GM12878 (cell line): ENCODE measurements at regions of chr10 and their contacts with region 1.

Region 1: GRCh38 chr10:74189999-74190421 is 39.0 kb downstream of the ADK start:
- DNase-seq: peak; percentile 49
- ATAC-seq: peak; percentile 94
- H3K4me3 ChIP-seq: peak overlapping the region; percentile 64
- H3K27ac ChIP-seq: peak overlapping the region; percentile 76
- H3K4me1 ChIP-seq: no peaks in the 10 kb centered on the region; the same call in 1 of the 2 replicates
- H3K27me3 ChIP-seq: no peaks in the 10 kb centered on the region
- CTCF ChIP-seq: no peak
- EP300 ChIP-seq: no peak
- POLR2A ChIP-seq: peak; percentile 44; the same call in 1 of the 2 replicates
- RAD21 ChIP-seq: no peak

Region 2: GRCh38 chr10:74088722-74089121 is 101.3 kb before region 1 on chr10:
- CTCF ChIA-PET with region 1: no interaction called
- POLR2A ChIA-PET with region 1: no interaction called
- RAD21 ChIA-PET with region 1: no interaction called
- SMC1A ChIA-PET with region 1: no interaction called
- in situ Hi-C with region 1: no loop called
- intact Hi-C with region 1: no loop called
- DNase-seq: no peak
- ATAC-seq: no peak
- H3K4me3 ChIP-seq: no peak overlapping the region
- H3K27ac ChIP-seq: no peak overlapping the region
- H3K4me1 ChIP-seq: peaks cover 10% of the 10 kb centered on the region
- H3K27me3 ChIP-seq: no peaks in the 10 kb centered on the region
- CTCF ChIP-seq: no peak
- EP300 ChIP-seq: no peak
- POLR2A ChIP-seq: no peak
- RAD21 ChIP-seq: no peak

Region 3: GRCh38 chr10:74156919-74157289 is 33.1 kb before region 1 on chr10:
- CTCF ChIA-PET with region 1: interaction called, 9 read pairs
- POLR2A ChIA-PET with region 1: interaction called, 12 read pairs
- RAD21 ChIA-PET with region 1: interaction called, 7 read pairs
- SMC1A ChIA-PET with region 1: interaction called, 16 read pairs
- in situ Hi-C with region 1: no loop called
- intact Hi-C with region 1: no loop called
- DNase-seq: no peak
- ATAC-seq: peak; percentile 69
- H3K4me3 ChIP-seq: 0 out of 2 replicates have a peak overlapping the region, but pooled peaks have one; percentile 10
- H3K27ac ChIP-seq: peak overlapping the region; percentile 38; the same call in 1 of the 2 replicates
- H3K4me1 ChIP-seq: peaks cover 14% of the 10 kb centered on the region
- H3K27me3 ChIP-seq: no peaks in the 10 kb centered on the region
- CTCF ChIP-seq: no peak
- EP300 ChIP-seq: no peak
- POLR2A ChIP-seq: no peak
- RAD21 ChIP-seq: no peak

Region 4: DNA sequence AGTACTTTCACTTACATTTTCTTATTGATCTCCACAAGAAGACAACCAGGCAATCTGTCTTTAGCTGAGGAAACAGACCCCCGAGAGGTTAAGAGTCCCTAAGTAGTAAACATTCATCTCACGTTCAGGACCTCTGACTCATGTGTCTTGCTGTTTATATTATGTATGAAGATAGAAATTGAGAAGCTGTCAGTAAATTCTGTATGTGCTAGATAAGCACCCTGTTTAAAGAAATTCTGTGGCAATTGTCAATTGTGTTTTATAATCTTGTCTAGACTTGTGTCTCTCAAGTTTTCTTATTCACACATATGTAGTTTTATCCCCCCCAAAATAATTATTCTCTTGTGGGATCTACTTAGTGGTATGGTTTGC is 24.5 kb before region 1 on chr10:
- CTCF ChIA-PET with region 1: interaction called, 6 read pairs
- POLR2A ChIA-PET with region 1: interaction called, 4 read pairs
- RAD21 ChIA-PET with region 1: interaction called, 12 read pairs
- SMC1A ChIA-PET with region 1: interaction called, 26 read pairs
- in situ Hi-C with region 1: no loop called
- intact Hi-C with region 1: no loop called
- DNase-seq: no peak
- ATAC-seq: peak; percentile 26
- H3K4me3 ChIP-seq: 0 out of 2 replicates have a peak overlapping the region, but pooled peaks have one; percentile 7
- H3K27ac ChIP-seq: peak overlapping the region; percentile 66; the same call in 1 of the 2 replicates
- H3K4me1 ChIP-seq: peaks cover 53% of the 10 kb centered on the region
- H3K27me3 ChIP-seq: no peaks in the 10 kb centered on the region
- CTCF ChIP-seq: no peak
- EP300 ChIP-seq: no peak
- POLR2A ChIP-seq: no peak
- RAD21 ChIP-seq: no peak

Region 5: DNA sequence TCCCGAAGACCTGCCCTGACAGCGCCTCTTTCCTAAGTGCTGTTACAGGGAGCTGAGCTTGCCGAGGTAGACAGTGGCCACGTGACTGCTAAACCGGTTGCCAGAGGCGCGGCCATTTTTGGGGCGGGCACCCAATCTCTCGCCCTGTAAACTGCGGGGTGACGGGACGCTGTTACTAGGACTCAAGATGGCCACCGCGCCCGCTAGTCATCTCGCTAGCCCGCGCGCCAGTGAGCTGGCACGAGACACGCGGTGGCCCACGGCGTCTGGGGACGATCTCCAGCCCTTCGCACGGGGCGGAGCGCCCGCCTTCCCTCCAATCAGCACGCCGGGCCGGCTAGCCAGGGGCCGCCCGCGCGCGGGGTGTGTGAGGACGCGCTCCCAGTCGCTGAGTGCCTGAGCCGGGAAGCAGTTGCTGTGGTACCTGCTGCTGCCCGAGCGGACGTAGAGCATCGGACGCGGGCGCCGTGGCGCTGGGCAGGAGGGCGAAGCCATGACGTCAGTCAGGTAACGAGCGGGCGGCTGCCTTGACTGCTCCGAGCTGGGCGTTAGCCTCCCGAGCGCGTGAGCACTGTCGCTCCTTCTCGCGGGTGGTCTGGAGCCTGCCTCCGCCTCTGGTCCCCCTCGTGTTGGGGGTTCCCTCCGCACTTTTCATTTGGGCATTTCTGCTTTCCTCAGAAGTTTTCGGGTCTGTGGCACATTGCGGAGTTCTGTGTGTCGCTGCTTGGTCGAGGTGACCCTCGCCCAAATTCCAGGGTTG is 13.4 kb before region 1 on chr10:
- CTCF ChIA-PET with region 1: interaction called, 4 read pairs
- POLR2A ChIA-PET with region 1: interaction called, 14 read pairs
- RAD21 ChIA-PET with region 1: interaction called, 9 read pairs
- SMC1A ChIA-PET with region 1: interaction called, 35 read pairs
- in situ Hi-C with region 1: no loop called
- intact Hi-C with region 1: no loop called
- DNase-seq: peak; percentile 84
- ATAC-seq: peak; percentile 95
- H3K4me3 ChIP-seq: peak overlapping the region; percentile 88
- H3K27ac ChIP-seq: peak overlapping the region; percentile 74
- H3K4me1 ChIP-seq: peaks cover 22% of the 10 kb centered on the region
- H3K27me3 ChIP-seq: no peaks in the 10 kb centered on the region
- CTCF ChIP-seq: no peak
- EP300 ChIP-seq: peak in 1 of 2 experiments; percentile 22; a peak in 2 of 4 replicates
- POLR2A ChIP-seq: peak; percentile 96
- RAD21 ChIP-seq: no peak